ENCODE measurements at regions of chr1 and their contacts with region 1.

Region 1: GRCh38 chr1:77978969-77979876 is at the start of gene FUBP1:
- DNase-seq: peak; percentile 99
- ATAC-seq: peak; percentile 79
- H3K4me3 ChIP-seq: peak within 1 kb of the TSS; percentile 94
- H3K27ac ChIP-seq: peak within 1 kb of the TSS; percentile 93
- H3K4me1 ChIP-seq: peaks cover 28% of the 10 kb centered on the region
- H3K27me3 ChIP-seq: no peaks in the 10 kb centered on the region
- CTCF ChIP-seq: peak; percentile 69
- total RNA-seq, gene FUBP1: 81.5 and 93.4 TPM in 2 replicates

Region 2: DNA sequence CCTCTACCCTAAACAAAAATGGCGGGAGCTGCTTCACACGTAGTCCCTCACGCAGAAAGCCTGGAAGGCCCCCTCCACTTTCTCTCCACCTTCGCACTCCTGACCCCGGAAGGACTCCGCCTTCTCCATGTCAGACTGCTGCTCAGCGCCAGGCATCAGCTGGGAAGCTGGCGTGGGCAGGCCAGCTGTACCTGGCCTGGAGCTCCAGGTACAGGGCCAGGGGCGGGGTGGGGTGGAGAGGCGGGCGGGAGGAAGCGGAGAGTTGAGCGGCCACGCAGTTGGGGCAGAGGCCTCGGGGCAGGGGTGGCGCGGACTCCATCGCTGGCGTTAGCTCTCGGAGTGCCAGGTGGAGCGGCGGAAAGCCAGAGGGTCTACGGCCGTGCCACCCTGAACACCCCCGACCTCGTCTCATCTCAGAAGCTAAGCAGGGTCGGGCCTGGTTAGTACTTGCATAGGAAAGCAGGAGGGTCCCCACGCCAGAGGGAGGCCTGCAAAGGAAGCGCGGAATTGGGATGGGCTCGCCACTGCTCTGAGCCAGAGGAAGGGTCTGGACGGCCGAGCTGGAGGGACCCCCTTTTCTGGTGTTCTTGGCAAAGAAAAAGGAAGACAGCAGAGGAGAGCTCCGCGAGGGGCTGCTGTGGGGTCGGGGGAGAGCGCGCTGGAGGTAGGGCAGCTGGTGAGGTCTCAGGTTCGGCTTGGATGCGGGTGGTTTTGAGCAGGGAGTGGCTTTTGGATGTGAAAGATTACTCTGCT is 199.5 kb before region 1 on chr1 and contains the start of gene MIGA1:
- CTCF ChIA-PET with region 1: no interaction called
- POLR2A ChIA-PET with region 1: interaction called, 3 read pairs
- intact Hi-C with region 1: loop called (anchors 5 kb)
- DNase-seq: peak; percentile 92
- ATAC-seq: peak; percentile 89
- H3K4me3 ChIP-seq: peak within 1 kb of the TSS; percentile 100
- H3K27ac ChIP-seq: peak within 1 kb of the TSS; percentile 37; the same call in 1 of the 2 replicates
- H3K4me1 ChIP-seq: peaks cover 43% of the 10 kb centered on the region
- H3K27me3 ChIP-seq: no peaks in the 10 kb centered on the region
- CTCF ChIP-seq: no peak
- total RNA-seq, gene MIGA1: 6.5 and 8.8 TPM in 2 replicates

Region 3: DNA sequence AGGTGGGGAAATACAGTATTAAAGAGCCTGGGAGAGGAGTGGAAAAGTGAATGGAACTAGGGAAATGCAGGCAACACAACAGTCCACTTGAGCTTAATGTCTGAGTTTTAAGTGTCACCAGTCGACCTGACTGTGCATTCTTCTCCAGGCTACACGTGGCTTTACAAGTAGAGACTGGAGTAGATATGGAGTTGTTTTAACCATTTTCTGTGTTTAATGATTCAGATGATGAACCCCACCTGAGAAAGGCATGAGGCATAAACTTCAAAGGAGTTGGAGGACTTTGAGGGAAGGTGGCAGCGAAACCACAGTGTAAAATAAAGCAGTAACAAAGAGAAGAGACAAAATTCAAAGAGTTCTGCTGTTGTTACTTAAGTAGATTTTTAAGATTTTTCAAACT is 12.9 kb before region 1 on chr1:
- CTCF ChIA-PET with region 1: no interaction called
- POLR2A ChIA-PET with region 1: interaction called, 10 read pairs
- intact Hi-C with region 1: no loop called
- DNase-seq: no peak
- ATAC-seq: no peak
- H3K4me3 ChIP-seq: no peak overlapping the region
- H3K27ac ChIP-seq: no peak overlapping the region
- H3K4me1 ChIP-seq: peaks cover 8% of the 10 kb centered on the region
- H3K27me3 ChIP-seq: no peaks in the 10 kb centered on the region
- CTCF ChIP-seq: no peak

Region 4: DNA sequence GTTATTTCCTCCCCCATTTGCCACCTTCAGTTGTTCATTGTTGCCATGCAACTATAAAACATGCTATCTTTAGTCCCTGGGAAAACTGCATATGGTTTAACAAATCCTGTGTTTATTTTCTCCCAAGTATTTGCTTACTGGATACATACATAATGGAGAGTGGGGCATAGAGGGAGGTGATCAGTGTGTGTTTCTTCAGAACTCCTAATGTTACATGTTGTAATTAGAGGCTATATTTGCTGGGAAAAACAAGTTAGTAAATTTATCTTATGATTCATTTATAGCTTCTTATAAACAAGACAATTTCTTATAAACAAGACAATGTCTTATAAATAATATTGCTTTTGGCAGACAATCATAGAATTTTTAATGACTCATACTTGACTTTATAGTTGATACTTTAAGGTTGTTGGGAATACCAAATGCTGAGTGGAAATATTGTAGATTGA is 59.3 kb after region 1 on chr1:
- CTCF ChIA-PET with region 1: interaction called, 3 read pairs
- POLR2A ChIA-PET with region 1: interaction called, 4 read pairs
- intact Hi-C with region 1: loop called (anchors 1 kb)
- DNase-seq: peak; percentile 79
- ATAC-seq: peak; percentile 85
- H3K4me3 ChIP-seq: no peak overlapping the region
- H3K27ac ChIP-seq: peak overlapping the region; percentile 74
- H3K4me1 ChIP-seq: peaks cover 13% of the 10 kb centered on the region
- H3K27me3 ChIP-seq: no peaks in the 10 kb centered on the region
- CTCF ChIP-seq: no peak

Region 5: GRCh38 chr1:78114034-78114956 is 135.1 kb after region 1 on chr1:
- CTCF ChIA-PET with region 1: interaction called, 9 read pairs
- POLR2A ChIA-PET with region 1: interaction called, 6 read pairs
- intact Hi-C with region 1: loop called (anchors 1 kb)
- DNase-seq: peak; percentile 91
- ATAC-seq: peak; percentile 76
- H3K4me3 ChIP-seq: no peak overlapping the region
- H3K27ac ChIP-seq: no peak overlapping the region
- H3K4me1 ChIP-seq: peaks cover 4% of the 10 kb centered on the region; the same call in 1 of the 2 replicates
- H3K27me3 ChIP-seq: no peaks in the 10 kb centered on the region
- CTCF ChIP-seq: peak; percentile 99

Measured in PC-3 (cell line).